ENCODE measurements at regions of chr19 and their contacts with region 1.

Region 1: GRCh38 chr19:39532233-39533002 is at the start of gene EID2B:
- DNase-seq: peak; percentile 95
- ATAC-seq: peak; percentile 94
- H3K4me3 ChIP-seq: peak within 1 kb of the TSS; percentile 89
- H3K27ac ChIP-seq: no peak within 1 kb of the TSS
- H3K4me1 ChIP-seq: peaks cover 4% of the 10 kb centered on the region; the same call in 1 of the 2 replicates
- H3K27me3 ChIP-seq: no peaks in the 10 kb centered on the region
- CTCF ChIP-seq: peak; percentile 83
- total RNA-seq, gene EID2B: 2.1 and 3.5 TPM in 2 replicates

Region 2: GRCh38 chr19:39474139-39474622 is 58.2 kb before region 1 on chr19:
- CTCF ChIA-PET with region 1: no interaction called
- POLR2A ChIA-PET with region 1: no interaction called
- intact Hi-C with region 1: loop called (anchors 10 kb)
- DNase-seq: peak; percentile 26
- ATAC-seq: peak; percentile 69
- H3K4me3 ChIP-seq: no peak overlapping the region
- H3K27ac ChIP-seq: no peak overlapping the region
- H3K4me1 ChIP-seq: no peaks in the 10 kb centered on the region
- H3K27me3 ChIP-seq: no peaks in the 10 kb centered on the region
- CTCF ChIP-seq: peak; percentile 77

Region 3: GRCh38 chr19:39497996-39498797 is 34.2 kb before region 1 on chr19:
- CTCF ChIA-PET with region 1: interaction called, 4 read pairs
- POLR2A ChIA-PET with region 1: interaction called, 5 read pairs
- intact Hi-C with region 1: loop called (anchors 5 kb)
- DNase-seq: peak; percentile 50
- ATAC-seq: peak; percentile 72
- H3K4me3 ChIP-seq: peak overlapping the region; percentile 63
- H3K27ac ChIP-seq: no peak overlapping the region
- H3K4me1 ChIP-seq: peaks cover 7% of the 10 kb centered on the region
- H3K27me3 ChIP-seq: no peaks in the 10 kb centered on the region
- CTCF ChIP-seq: peak; percentile 47

Measured in PC-3 (cell line).